ENCODE measurements at regions of chr20 and their contacts with region 1.

Region 1: GRCh38 chr20:50189681-50190582 is 698 bp upstream of the CEBPB start:
- DNase-seq: peak; percentile 79 to 86 (median 82)
- H3K4me3 ChIP-seq: peak overlapping the region in 1 of 2 donors; percentile 76
- H3K4me3 Mint-ChIP-seq: peak overlapping the region; percentile 38 to 68 (median 58)
- H3K27ac ChIP-seq: peak overlapping the region; percentile 49
- H3K27ac Mint-ChIP-seq: peak overlapping the region; percentile 10 to 75 (median 36)
- H3K4me1 ChIP-seq: peaks cover 30% of the 10 kb centered on the region
- H3K4me1 Mint-ChIP-seq: peaks cover 7 to 39% (median 23%) of the 10 kb centered on the region in 4 donors
- H3K27me3 ChIP-seq: no peaks in the 10 kb centered on the region
- H3K27me3 Mint-ChIP-seq: peaks cover 6 to 10% of the 10 kb centered on the region in 2 donors

Region 2: DNA sequence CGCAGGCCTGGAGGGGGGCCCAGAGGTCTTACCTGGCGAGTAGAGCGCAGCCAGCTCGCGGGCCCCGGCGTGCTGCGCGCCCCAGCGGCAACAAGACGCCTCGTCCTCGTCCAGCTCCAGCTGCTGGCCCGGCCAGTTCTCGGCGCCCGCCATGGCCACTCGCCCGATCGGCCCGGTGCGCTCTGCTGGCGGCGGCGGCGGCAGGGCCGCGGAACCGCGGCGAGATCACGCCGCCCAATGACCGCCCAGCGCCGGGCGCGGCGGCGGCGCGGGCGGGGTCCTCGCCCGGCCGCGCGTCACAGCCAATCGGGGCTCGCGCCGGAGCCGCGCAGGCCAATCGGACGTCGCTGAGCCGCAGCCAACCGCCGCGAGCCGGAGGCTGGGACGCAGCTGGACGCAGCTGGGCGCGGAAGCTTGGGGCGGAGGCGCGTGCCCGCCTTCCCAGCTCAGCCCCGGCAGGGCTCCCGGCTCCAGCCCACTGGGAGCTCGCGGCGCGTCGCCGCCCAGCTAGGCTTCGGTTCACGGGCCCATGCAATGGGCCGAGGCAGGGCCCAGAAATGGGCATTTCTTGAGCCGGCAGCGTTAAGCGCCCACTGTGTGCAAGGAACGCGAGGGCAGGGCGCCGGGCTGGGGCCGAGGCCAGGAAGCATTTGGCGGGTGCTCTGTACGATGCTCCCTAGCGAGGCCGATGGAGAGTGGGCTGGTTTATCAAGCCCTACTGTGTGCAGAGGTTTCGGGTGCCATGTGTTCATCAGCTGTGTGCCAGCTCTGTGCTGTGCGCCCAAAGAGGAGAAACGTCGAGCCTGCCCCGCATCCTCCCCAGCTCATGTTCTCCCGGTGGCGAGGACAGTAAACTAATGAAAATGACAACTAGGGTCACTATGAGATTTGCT is 36.2 kb before region 1 on chr20 and contains the start of gene PEDS1:
- CTCF ChIA-PET with region 1: interaction called, 5 read pairs
- POLR2A ChIA-PET with region 1: interaction called, 14 read pairs
- intact Hi-C with region 1: no loop called
- DNase-seq: peak; percentile 77 to 86 (median 82)
- H3K4me3 ChIP-seq: peak within 1 kb of the TSS; percentile 83 to 87
- H3K4me3 Mint-ChIP-seq: peak within 1 kb of the TSS; percentile 87 to 94 (median 90)
- H3K27ac ChIP-seq: peak within 1 kb of the TSS; percentile 81
- H3K27ac Mint-ChIP-seq: peak within 1 kb of the TSS; percentile 93 to 96 (median 95)
- H3K4me1 ChIP-seq: peaks cover 50% of the 10 kb centered on the region
- H3K4me1 Mint-ChIP-seq: peaks cover 33 to 53% (median 42%) of the 10 kb centered on the region in 4 donors
- H3K27me3 ChIP-seq: no peaks in the 10 kb centered on the region
- H3K27me3 Mint-ChIP-seq: no peaks in the 10 kb centered on the region
- total RNA-seq, gene PEDS1: 16.8 TPM

Region 3: DNA sequence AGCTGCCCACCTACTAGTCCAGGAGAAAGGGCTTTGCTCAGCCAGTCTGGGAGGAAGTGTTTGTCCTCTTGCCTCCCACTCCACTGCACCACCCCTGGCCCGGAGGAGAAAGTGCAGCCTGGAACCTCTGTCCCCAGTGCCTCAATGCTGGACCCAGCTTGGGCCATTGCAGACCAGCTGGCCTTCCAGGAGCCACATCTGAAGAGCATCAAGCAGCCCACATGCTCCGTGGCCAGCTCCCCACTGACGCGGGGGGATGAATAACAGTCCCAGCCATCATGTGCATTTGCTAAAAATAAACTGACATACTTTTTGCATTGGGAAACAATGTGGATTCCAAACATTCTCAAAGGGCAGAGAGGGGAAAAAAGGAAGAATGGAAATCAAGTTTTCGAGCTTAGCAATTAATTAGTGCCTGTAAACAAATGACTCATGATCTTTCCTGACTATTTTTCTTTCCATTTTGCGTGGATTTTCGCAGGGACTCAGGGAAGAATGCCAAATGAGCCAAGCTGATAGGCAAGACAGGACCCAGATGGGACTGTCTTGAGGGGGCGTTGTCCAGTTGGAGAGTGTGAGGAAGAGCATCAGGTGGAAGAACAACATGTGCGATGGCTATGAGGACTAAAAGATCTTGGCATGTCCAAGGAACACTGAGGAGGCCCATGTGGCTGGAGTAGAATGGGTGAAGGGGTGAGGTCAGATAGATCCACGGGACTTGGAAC is 34.8 kb after region 1 on chr20:
- CTCF ChIA-PET with region 1: no interaction called
- POLR2A ChIA-PET with region 1: no interaction called
- intact Hi-C with region 1: no loop called
- DNase-seq: no peak
- H3K4me3 ChIP-seq: no peak overlapping the region
- H3K4me3 Mint-ChIP-seq: no peak overlapping the region
- H3K27ac ChIP-seq: no peak overlapping the region
- H3K27ac Mint-ChIP-seq: no peak overlapping the region
- H3K4me1 ChIP-seq: no peaks in the 10 kb centered on the region
- H3K4me1 Mint-ChIP-seq: no peaks in the 10 kb centered on the region
- H3K27me3 ChIP-seq: no peaks in the 10 kb centered on the region
- H3K27me3 Mint-ChIP-seq: no peaks in the 10 kb centered on the region

Region 4: DNA sequence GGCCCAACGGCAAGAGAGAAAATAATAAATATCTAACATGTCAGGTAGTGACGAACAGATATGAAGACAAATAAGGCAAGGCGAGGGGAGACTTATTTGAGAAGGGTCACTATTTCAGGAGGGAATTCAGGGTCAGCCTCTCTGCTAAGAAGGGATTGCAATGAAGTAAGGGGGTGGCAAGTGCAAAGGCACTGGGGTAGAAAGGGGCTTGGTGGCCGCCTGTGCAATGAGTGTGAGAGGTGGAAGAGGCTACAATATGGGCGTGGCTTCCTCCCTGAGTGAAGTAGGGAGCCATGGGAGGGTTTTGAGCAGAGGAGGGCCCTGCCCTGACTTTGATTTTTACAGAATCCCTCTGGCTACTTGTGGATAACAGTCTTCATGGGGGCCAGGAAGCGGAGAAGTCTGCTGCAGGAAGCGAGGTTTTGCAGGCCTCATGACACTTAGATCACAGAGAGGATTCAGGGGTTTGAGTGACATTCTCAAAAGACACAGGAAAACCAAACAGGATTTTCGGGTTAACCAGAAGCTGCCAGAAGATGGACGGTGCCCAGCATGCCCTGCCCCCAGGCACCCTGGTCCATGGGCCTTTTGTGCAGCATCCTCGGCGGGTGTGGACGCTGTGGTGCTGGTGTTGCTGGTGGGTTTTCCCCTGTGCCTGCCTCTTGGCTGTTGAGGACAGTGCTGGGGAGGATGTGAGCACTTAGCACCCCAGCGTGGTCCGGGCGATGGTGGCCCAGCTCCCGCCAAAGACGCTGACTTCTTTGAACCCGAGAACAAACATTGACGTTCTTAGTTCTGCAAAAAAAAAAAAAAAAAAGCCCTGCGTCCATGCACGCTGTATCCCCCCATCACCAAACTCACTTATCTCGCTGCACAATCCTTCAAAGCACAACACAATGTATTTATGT is 196.1 kb after region 1 on chr20:
- CTCF ChIA-PET with region 1: interaction called, 5 read pairs
- POLR2A ChIA-PET with region 1: interaction called, 14 read pairs
- intact Hi-C with region 1: loop called (anchors 5 kb)
- DNase-seq: peak; percentile 77 to 86 (median 82)
- H3K4me3 ChIP-seq: peak overlapping the region in 1 of 2 donors; percentile 24
- H3K4me3 Mint-ChIP-seq: peak overlapping the region; percentile 27 to 76 (median 64)
- H3K27ac ChIP-seq: peak overlapping the region; percentile 37
- H3K27ac Mint-ChIP-seq: peak overlapping the region; percentile 35 to 96 (median 88)
- H3K4me1 ChIP-seq: peaks cover 55% of the 10 kb centered on the region
- H3K4me1 Mint-ChIP-seq: peaks cover 34 to 73% (median 57%) of the 10 kb centered on the region in 4 donors
- H3K27me3 ChIP-seq: no peaks in the 10 kb centered on the region
- H3K27me3 Mint-ChIP-seq: no peaks in the 10 kb centered on the region

Region 5: DNA sequence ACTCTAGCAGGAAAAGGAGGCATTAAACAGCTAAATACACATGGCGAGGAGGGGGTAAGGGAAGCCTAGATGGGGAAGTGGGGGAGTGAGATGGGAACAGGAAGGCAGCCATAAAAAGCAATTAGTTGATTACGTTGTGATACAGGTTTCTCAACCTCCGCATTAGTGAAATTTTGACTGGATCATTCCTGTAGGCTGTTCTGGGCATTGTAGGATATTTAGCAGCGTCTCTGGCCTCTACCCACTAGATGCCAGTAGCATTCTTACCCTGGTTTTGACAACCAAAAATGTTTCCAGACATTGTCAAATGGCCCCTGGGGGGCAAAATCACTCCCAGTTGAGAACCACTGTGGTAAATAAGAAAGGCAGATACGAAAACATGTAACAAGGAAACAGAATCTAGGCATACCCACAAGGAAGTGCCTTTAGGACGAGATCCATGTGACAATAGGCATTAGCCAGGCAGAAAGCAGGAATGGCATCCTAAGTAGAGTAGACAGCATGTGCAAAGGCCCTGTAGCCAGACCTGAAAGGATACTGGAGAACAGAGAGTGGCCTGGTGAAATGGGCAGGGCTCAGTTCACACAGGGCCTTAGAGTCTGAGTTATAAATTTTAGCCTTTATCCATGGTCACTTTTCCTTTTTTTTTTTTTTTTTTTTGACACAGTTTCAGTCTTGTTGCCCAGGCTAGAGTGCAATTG is 294.5 kb after region 1 on chr20:
- CTCF ChIA-PET with region 1: interaction called, 4 read pairs
- POLR2A ChIA-PET with region 1: interaction called, 13 read pairs
- intact Hi-C with region 1: no loop called
- DNase-seq: no peak
- H3K4me3 ChIP-seq: peak overlapping the region in 1 of 2 donors; percentile 68
- H3K4me3 Mint-ChIP-seq: peak overlapping the region; percentile 13 to 98 (median 96)
- H3K27ac ChIP-seq: peak overlapping the region; percentile 81
- H3K27ac Mint-ChIP-seq: peak overlapping the region; percentile 85 to 100 (median 97)
- H3K4me1 ChIP-seq: peaks cover 18% of the 10 kb centered on the region
- H3K4me1 Mint-ChIP-seq: peaks cover 16 to 26% (median 24%) of the 10 kb centered on the region in 4 donors
- H3K27me3 ChIP-seq: no peaks in the 10 kb centered on the region
- H3K27me3 Mint-ChIP-seq: peaks cover 0 to 4% of the 10 kb centered on the region in 2 donors

Region 6: DNA sequence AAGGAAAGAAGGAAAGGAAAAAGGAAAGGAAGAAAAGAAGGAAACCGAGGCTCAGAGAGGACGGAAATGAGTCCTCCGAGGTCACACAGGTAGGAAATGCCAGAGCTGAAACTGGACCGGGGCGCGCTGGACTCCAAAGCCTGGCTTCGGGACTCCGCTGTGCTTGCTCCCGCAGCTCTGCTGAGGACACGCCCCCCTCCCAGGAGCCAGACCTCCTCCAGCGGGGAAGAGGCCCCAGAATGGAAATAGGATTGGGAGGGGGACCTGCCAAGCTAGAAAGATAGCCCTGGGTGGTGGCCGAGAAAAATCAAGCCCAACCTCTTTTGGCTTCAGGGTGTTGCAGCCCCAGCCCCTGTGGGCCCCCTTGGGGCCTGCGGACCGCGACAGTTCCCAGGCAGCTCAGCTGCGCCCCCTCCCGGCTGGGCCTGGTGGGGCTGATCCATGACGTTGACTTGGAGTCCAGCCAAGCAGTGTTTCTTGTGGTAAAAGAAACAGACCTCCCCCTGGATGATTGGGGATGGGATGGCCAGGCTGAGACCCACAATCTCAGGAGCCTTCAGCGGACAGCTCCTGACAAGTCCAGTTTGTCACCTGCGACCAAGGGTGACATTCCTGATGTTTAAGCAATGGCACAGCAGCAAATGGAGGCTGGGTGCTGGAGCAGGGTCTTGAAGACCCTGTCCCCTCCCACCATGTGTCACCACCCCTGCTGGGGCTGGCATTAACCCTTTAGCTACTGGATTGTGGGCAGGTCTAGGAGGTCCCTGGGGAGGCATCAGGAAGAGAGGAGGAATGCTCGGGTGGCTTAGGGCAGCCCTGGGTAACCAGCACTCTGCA is 446.0 kb after region 1 on chr20:
- CTCF ChIA-PET with region 1: no interaction called
- POLR2A ChIA-PET with region 1: no interaction called
- intact Hi-C with region 1: loop called (anchors 5 kb)
- DNase-seq: peak; percentile 33 to 46 (median 36)
- H3K4me3 ChIP-seq: no peak overlapping the region
- H3K4me3 Mint-ChIP-seq: no peak overlapping the region
- H3K27ac ChIP-seq: no peak overlapping the region
- H3K27ac Mint-ChIP-seq: no peak overlapping the region
- H3K4me1 ChIP-seq: no peaks in the 10 kb centered on the region
- H3K4me1 Mint-ChIP-seq: peaks cover 0 to 4% (median under 1%) of the 10 kb centered on the region in 4 donors
- H3K27me3 ChIP-seq: no peaks in the 10 kb centered on the region
- H3K27me3 Mint-ChIP-seq: peaks cover 0 to 1% of the 10 kb centered on the region in 2 donors

Measured in CD4-positive, alpha-beta memory T cell (primary cell).